ENCODE measurements at regions of chr15 and their contacts with region 1.

Region 1: DNA sequence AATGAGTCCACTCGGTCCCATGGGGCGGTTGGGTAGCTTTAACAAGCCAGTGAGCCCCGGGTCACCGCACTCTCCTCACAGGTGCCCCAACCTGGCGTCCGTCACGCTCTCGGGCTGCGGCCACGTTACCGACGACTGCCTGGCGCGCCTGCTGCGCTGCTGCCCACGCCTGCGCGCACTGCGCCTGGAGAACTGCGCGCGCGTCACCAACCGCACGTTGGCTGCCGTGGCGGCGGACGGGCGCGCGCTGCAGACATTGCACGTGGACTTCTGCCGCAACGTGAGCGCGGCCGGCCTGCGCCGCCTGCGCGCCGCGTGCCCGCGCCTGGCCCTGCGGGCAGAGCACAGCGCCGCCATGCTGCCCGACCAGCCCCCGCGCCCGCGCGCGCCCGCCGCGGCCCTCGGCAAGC is 3.4 kb downstream of the FBXL22 start:
- DNase-seq: peak; percentile 92 to 97 (median 97)
- ATAC-seq: peak; percentile 78 to 81
- H3K4me3 ChIP-seq: peak overlapping the region; percentile 57
- H3K27ac ChIP-seq: peak overlapping the region; percentile 55
- H3K4me1 ChIP-seq: peaks cover 1% of the 10 kb centered on the region
- H3K27me3 ChIP-seq: no peaks in the 10 kb centered on the region

Region 2: DNA sequence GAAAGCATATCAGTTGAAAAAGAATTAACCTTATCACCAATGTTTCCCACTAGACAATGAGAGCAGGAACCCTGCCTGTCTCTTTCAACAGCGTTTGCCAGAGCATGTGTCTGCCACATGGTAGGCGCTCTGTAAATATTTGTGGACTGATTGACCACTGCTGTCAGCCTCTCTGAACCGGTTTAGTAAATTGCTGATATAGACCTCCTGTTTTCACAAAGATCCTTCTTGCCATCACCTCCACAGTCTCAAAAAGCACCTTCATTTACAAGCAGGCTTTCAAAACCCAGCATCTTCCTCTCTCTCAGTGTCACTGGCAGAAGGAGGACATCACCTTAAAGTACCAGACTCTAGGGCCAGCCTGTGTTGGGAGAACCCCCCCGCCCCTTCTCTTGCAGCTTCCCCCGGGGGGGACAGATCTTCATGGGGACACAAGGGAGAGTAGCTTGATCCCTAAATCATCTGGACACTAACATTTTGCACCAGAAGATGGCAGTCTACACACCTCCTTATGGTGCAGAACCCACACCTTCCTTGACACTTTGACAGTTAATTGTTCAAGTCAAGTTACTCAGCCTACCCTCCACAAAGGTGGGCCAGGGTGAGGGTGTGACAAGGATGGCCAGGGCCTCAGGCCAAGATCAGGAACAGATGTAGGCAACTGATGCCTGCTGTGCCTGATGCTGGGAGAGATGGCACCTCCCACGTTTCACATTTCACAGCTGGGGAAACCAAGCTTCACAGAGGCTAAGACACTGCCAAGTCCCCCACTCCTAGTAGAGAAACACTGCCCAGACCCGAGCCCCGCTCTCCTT is 134.0 kb before region 1 on chr15:
- intact Hi-C with region 1: loop called in 1 of 4 experiments (anchors 2 kb)
- DNase-seq: no peak
- ATAC-seq: peak; percentile 75 to 77
- H3K4me3 ChIP-seq: no peak overlapping the region
- H3K27ac ChIP-seq: no peak overlapping the region
- H3K4me1 ChIP-seq: no peaks in the 10 kb centered on the region
- H3K27me3 ChIP-seq: no peaks in the 10 kb centered on the region

Region 3: GRCh38 chr15:63487076-63487757 is 113.4 kb before region 1 on chr15:
- intact Hi-C with region 1: loop called in 2 of 4 experiments (anchors 5 to 10 kb)
- DNase-seq: peak; percentile 87 to 96 (median 96)
- ATAC-seq: peak; percentile 91 to 94
- H3K4me3 ChIP-seq: no peak overlapping the region
- H3K27ac ChIP-seq: no peak overlapping the region
- H3K4me1 ChIP-seq: peaks cover 4% of the 10 kb centered on the region
- H3K27me3 ChIP-seq: no peaks in the 10 kb centered on the region

Region 4: GRCh38 chr15:63504247-63504978 is 96.2 kb before region 1 on chr15 and contains the start of gene USP3:
- intact Hi-C with region 1: loop called in 2 of 4 experiments (anchors 5 to 10 kb)
- DNase-seq: peak; percentile 95 to 98 (median 98)
- ATAC-seq: peak; percentile 94 to 95
- H3K4me3 ChIP-seq: peak within 1 kb of the TSS; percentile 83
- H3K27ac ChIP-seq: peak within 1 kb of the TSS; percentile 98
- H3K4me1 ChIP-seq: peaks cover 6% of the 10 kb centered on the region
- H3K27me3 ChIP-seq: no peaks in the 10 kb centered on the region
- total RNA-seq, gene USP3: 17.6 to 26.0 (median 21.2) TPM

Region 5: GRCh38 chr15:64067564-64068030 is 467.0 kb after region 1 on chr15:
- intact Hi-C with region 1: loop called in 1 of 4 experiments (anchors 10 kb)
- DNase-seq: peak; percentile 52 to 75 (median 72)
- ATAC-seq: peak; percentile 75 to 77
- H3K4me3 ChIP-seq: no peak overlapping the region
- H3K27ac ChIP-seq: no peak overlapping the region
- H3K4me1 ChIP-seq: peaks cover 7% of the 10 kb centered on the region
- H3K27me3 ChIP-seq: no peaks in the 10 kb centered on the region

Region 6: GRCh38 chr15:64092075-64092820 is 491.6 kb after region 1 on chr15:
- intact Hi-C with region 1: no loop called
- DNase-seq: no peak
- ATAC-seq: no peak
- H3K4me3 ChIP-seq: peak overlapping the region; percentile 72
- H3K27ac ChIP-seq: peak overlapping the region; percentile 92
- H3K4me1 ChIP-seq: peaks cover 5% of the 10 kb centered on the region
- H3K27me3 ChIP-seq: no peaks in the 10 kb centered on the region

Region 7: GRCh38 chr15:64686216-64686631 is 1085.6 kb after region 1 on chr15:
- intact Hi-C with region 1: no loop called
- DNase-seq: no peak
- ATAC-seq: no peak
- H3K4me3 ChIP-seq: no peak overlapping the region
- H3K27ac ChIP-seq: no peak overlapping the region
- H3K4me1 ChIP-seq: peaks cover 12% of the 10 kb centered on the region
- H3K27me3 ChIP-seq: no peaks in the 10 kb centered on the region